PC-9 (cell line): ENCODE measurements at regions of chr16 and their contacts with region 1.

Region 1: GRCh38 chr16:26195225-26195624 is 503.5 kb downstream of the HS3ST4 start:
- DNase-seq: no peak
- H3K4me3 ChIP-seq: no peak overlapping the region
- H3K27ac ChIP-seq: no peak overlapping the region
- H3K4me1 ChIP-seq: no peaks in the 10 kb centered on the region
- H3K27me3 ChIP-seq: no peaks in the 10 kb centered on the region
- CTCF ChIP-seq: no peak

Region 2: DNA sequence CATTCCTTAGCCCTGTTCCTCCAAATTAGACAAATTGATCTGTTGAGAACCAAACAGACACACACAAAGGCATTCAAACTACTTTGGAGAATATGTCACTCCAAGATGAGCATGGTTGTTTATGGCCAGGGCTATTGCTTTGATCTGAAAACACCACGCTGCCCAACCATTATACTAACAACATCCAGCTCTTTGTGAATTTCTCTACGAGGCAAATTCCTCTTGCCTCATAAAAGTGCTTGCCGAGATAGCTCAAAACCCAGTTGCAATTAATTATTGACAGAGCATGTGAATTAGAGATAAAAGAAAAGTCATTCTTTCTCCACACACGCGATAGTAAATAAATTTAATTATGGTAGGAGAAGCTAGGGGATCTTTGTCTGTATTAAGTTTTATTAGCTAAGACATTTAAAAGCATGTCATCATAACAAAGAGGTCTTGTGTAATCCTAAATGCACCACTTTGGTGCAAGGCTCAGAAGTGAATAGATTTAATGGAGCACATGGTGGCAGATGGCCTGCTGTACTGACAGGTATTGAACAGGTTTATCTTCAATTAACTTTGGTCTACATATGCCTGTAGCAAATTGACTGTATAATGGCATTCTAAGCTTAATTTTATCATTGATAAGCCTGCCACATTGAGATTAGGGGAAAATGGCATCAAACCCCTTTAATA is 61.7 kb before region 1 on chr16:
- CTCF ChIA-PET with region 1: no interaction called
- POLR2A ChIA-PET with region 1: no interaction called
- intact Hi-C with region 1: loop called (anchors 10 kb)
- DNase-seq: no peak
- H3K4me3 ChIP-seq: no peak overlapping the region
- H3K27ac ChIP-seq: no peak overlapping the region
- H3K4me1 ChIP-seq: no peaks in the 10 kb centered on the region
- H3K27me3 ChIP-seq: peaks cover 7% of the 10 kb centered on the region; the same call in 1 of the 2 replicates
- CTCF ChIP-seq: no peak